ENCODE measurements at regions of chr6 and their contacts with region 1.

Region 1: DNA sequence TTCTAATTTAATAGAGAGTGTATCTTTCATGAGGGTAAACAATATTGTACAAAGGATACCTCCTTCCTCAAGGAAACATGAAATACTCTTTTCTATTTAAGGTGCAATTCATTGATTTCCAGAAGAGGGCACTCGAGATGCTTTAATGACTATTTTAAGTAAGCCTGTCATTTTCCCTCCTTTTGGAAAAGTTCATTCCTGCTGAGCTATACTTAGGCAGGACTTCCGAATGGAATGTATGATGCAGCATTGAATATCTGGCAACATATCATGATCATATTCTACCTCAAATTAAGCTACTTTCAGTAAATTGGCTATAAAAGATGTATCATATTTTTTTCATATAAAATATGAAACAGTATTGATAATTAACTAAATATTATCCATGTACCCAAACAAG is 5.0 kb downstream of the DST start:
- DNase-seq: peak; percentile 87
- ATAC-seq: peak; percentile 62
- H3K4me3 ChIP-seq: no peak overlapping the region
- H3K27ac ChIP-seq: no peak overlapping the region
- H3K4me1 ChIP-seq: peaks cover 9% of the 10 kb centered on the region
- H3K27me3 ChIP-seq: no peaks in the 10 kb centered on the region
- CTCF ChIP-seq: peak; percentile 75

Region 2: GRCh38 chr6:56699066-56699654 is 61.5 kb after region 1 on chr6:
- CTCF ChIA-PET with region 1: interaction called, 5 read pairs
- POLR2A ChIA-PET with region 1: no interaction called
- intact Hi-C with region 1: loop called (anchors 1 kb)
- DNase-seq: peak; percentile 73
- ATAC-seq: peak; percentile 51
- H3K4me3 ChIP-seq: no peak overlapping the region
- H3K27ac ChIP-seq: no peak overlapping the region
- H3K4me1 ChIP-seq: peaks cover 17% of the 10 kb centered on the region
- H3K27me3 ChIP-seq: no peaks in the 10 kb centered on the region
- CTCF ChIP-seq: peak; percentile 84

Region 3: DNA sequence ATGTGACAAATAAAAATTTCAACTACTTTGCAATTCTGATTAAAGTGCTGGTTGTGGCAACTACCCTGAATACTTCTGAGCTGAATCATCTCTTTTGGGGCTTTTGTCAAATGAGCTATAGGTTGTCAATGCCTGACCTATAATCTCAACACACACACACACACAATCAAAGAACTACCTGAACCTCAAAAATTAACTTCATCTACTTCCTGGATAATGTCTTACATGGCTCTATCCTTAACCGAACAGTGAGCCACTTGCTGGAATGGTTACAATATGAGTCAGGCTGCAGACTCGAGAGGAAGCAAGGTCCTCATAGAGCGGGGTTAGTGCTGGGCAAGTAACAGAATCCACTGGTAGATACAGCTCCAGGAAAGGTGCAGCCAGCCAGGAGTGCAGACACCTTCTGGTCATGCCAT is 75.6 kb after region 1 on chr6:
- CTCF ChIA-PET with region 1: no interaction called
- POLR2A ChIA-PET with region 1: no interaction called
- intact Hi-C with region 1: no loop called
- DNase-seq: peak; percentile 92
- ATAC-seq: peak; percentile 77
- H3K4me3 ChIP-seq: peak overlapping the region; percentile 20; the same call in 1 of the 2 replicates
- H3K27ac ChIP-seq: peak overlapping the region; percentile 83
- H3K4me1 ChIP-seq: peaks cover 62% of the 10 kb centered on the region
- H3K27me3 ChIP-seq: no peaks in the 10 kb centered on the region
- CTCF ChIP-seq: no peak

Region 4: GRCh38 chr6:56757588-56757984 is 119.9 kb after region 1 on chr6:
- CTCF ChIA-PET with region 1: interaction called, 5 read pairs
- POLR2A ChIA-PET with region 1: no interaction called
- intact Hi-C with region 1: loop called (anchors 1 kb)
- DNase-seq: peak; percentile 72
- ATAC-seq: peak; percentile 78
- H3K4me3 ChIP-seq: no peak overlapping the region
- H3K27ac ChIP-seq: no peak overlapping the region
- H3K4me1 ChIP-seq: peaks cover 32% of the 10 kb centered on the region
- H3K27me3 ChIP-seq: no peaks in the 10 kb centered on the region
- CTCF ChIP-seq: peak; percentile 80

Region 5: DNA sequence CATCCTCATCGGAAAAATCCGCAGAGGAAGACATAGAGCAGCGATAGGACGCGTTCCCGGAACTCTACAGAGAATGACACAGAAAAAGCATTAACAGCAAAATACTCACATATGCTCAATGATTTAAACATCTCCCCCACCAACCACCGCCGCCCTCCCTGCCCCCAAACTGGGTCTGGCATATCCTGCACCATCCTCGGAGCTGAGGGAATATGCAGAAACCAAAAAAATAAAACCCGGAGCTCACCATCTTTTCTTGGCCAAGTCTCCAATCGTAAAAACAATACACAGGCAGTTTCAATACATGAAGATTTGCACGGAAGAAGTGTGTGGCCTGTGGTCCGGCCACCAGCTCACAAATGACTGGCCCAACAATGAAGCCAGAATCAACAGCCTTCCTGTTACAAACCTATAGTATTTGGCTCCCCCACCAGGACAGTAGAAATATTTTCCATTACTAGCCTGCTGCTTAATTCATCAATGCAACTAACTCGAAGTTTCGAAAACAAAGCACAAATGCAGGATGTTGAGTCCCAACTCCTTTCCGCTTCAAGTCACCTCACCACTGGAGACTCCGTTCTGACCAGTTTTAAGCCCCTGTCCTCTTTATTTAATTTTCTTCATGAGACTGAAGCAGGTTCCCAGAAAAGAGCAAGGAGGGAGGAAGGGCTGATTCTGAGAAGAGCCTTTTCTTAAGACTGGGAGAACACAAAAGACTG is 214.1 kb after region 1 on chr6:
- CTCF ChIA-PET with region 1: interaction called, 3 read pairs
- POLR2A ChIA-PET with region 1: no interaction called
- intact Hi-C with region 1: loop called (anchors 5 kb)
- DNase-seq: peak; percentile 77
- ATAC-seq: peak; percentile 94
- H3K4me3 ChIP-seq: peak overlapping the region; percentile 46; the same call in 1 of the 2 replicates
- H3K27ac ChIP-seq: peak overlapping the region; percentile 9
- H3K4me1 ChIP-seq: peaks cover 16% of the 10 kb centered on the region
- H3K27me3 ChIP-seq: no peaks in the 10 kb centered on the region
- CTCF ChIP-seq: peak; percentile 85

Region 6: DNA sequence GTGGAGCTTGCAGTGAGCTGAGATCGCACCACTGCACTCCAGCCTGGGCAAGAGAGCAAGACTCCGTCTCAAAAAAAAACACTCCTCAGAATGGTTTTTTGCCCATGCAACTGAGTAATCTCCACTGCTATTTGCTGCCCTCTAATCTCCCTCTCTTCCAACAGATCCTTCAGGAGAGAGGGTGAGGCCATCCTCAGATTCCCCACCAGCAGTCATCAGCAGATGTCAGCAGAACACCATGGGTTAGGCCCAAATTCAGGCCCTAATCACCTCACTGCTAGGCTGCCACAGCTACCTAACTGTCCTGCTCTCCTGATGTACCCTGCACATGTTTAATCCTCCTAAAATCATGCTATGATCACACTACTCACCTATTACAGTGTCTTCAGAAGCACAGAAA is 254.1 kb after region 1 on chr6:
- CTCF ChIA-PET with region 1: no interaction called
- POLR2A ChIA-PET with region 1: interaction called, 10 read pairs
- intact Hi-C with region 1: no loop called
- DNase-seq: peak; percentile 30
- ATAC-seq: peak; percentile 49; the same call in 1 of the 2 replicates
- H3K4me3 ChIP-seq: no peak overlapping the region
- H3K27ac ChIP-seq: no peak overlapping the region
- H3K4me1 ChIP-seq: peaks cover 15% of the 10 kb centered on the region
- H3K27me3 ChIP-seq: no peaks in the 10 kb centered on the region
- CTCF ChIP-seq: 0 out of 2 replicates have a peak, but pooled peaks have one; percentile 21